Right ventricle myocardium superior (tissue), 1 donor: ENCODE measurements at regions of chr16 and their contacts with region 1.

Region 1: DNA sequence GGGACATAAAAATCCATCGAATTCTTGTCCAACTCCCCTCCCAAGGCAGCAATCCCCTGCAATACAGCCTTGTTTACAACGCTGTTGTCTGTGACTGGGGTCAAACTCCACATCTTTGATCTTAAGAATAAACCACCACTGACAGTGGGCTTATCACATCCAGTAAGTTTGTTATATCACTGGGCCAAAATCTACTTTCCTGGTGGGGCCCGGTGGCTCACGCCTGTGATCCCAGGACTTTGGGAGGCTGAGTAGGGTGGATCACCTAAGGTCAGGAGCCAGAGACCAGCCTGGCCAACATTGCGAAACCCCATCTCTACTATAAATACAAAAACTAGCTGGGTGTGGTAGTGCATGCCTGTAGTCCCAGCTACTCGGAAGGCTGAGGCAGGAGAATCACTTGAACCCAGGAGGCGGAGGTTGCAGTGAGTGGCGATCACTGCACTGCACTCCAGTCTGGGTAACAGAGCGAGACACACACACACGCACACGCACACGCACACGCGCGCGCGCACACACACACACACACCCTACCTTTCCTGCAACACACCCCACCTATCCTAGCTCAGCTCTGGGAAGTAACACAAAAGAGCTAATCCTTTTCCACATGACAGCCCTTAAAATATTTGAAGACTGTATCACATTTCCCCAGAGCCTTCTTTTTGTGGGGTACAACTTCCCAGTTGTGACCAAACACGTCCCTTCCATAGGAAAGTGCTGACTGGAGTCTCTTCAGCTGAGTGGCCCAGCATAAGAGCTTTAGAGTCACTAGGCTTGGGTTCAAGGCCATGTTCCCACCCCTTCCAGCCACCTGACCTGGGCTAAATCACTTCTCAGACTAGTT is 20.9 kb upstream of the ABCC1 start:
- DNase-seq: no peak
- ATAC-seq: no peak

Region 2: DNA sequence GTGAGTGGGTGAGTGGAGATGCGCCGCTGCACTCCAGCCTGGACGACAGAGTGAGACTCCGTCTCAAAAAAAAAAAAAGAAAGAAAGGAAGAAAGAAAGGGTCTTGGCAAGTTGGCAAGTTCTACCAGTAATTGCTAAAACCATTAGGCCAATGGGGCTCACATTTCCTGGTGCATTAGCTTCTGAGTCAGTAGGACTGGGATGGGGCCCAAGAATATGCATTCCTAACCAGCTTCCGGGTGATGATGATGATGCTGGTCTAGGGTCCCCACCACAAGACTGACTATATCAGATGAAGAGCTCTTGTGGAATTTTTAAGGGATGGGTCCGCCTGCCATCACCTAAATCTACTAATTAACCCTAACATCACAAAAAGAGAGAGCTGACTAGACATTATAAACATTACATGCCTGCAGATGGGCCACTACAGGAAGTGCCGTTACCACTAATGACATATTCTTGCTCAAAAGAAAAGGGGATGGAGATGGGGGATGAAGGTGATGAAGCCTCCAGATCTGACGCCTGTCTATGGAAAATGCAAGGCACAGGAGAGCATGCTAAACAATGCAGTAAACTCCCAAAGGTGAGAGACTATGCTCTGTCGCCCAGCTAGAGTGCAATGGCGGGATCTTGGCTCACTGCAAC is 84.7 kb before region 1 on chr16:
- intact Hi-C with region 1: loop called (anchors 10 kb)
- DNase-seq: no peak
- ATAC-seq: no peak